PC-9 (cell line): ENCODE measurements at regions of chr18 and their contacts with region 1.

Region 1: DNA sequence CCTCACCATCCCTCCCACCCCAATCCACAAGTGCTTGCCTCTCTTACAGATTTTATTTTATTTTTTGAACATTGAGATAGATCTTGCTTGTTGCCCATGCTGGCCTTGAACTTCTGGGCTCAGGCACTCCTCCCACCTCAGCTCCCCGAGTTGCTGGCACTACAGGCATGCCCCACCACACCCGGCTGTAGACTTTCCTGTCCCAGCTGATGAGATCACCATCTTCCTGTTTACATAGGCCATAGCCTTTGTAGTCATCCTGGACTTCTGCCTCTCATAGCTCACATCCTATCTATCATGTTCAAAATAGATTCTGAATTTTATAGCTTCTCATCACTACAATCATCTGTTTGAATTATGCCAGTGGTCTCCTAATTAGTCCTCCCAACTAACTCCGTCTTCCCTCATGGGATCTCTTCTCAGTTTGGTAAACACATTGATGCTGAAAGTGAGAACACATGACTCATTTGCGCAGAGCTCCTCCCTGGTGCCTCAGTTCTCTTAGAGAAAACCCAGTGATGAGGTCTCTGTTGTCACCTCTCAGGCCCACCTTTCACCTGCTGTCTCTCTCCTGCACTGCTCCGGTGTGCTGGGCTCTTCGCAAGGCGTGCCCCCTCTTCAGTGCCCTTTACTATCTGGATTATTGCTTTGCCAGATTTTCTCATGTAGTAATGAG is 243.0 kb downstream of the ZNF407 start:
- DNase-seq: peak in 1 of 2 experiments; percentile 52
- H3K4me3 ChIP-seq: no peak overlapping the region
- H3K27ac ChIP-seq: no peak overlapping the region
- H3K4me1 ChIP-seq: peaks cover 18% of the 10 kb centered on the region
- H3K27me3 ChIP-seq: no peaks in the 10 kb centered on the region
- CTCF ChIP-seq: no peak

Region 2: GRCh38 chr18:74567822-74568221 is 272.8 kb before region 1 on chr18:
- CTCF ChIA-PET with region 1: no interaction called
- POLR2A ChIA-PET with region 1: no interaction called
- intact Hi-C with region 1: no loop called
- DNase-seq: no peak
- H3K4me3 ChIP-seq: no peak overlapping the region
- H3K27ac ChIP-seq: no peak overlapping the region
- H3K4me1 ChIP-seq: no peaks in the 10 kb centered on the region
- H3K27me3 ChIP-seq: peaks cover 91% of the 10 kb centered on the region
- CTCF ChIP-seq: no peak

Region 3: DNA sequence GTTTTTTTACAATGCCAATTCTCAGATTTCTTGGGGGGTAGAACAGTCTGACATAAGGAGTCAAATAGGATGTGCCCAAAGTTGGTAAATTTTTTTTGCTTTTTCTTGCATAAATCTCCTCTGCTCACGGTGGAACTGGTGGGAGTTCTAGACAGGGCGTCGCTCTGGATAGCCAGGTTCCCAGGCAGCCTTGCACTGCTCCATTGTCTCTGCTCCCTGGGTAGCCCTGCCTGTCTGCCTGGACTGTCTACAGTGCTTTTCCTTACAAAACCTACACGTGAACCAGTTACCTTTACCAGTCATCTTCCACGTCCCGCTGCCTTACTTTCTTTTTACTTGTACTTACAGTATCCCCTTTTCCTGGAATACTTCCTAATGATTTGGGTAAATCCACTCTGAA is 125.8 kb before region 1 on chr18:
- CTCF ChIA-PET with region 1: no interaction called
- POLR2A ChIA-PET with region 1: no interaction called
- intact Hi-C with region 1: no loop called
- DNase-seq: no peak
- H3K4me3 ChIP-seq: no peak overlapping the region
- H3K27ac ChIP-seq: no peak overlapping the region
- H3K4me1 ChIP-seq: no peaks in the 10 kb centered on the region
- H3K27me3 ChIP-seq: no peaks in the 10 kb centered on the region
- CTCF ChIP-seq: no peak

Region 4: DNA sequence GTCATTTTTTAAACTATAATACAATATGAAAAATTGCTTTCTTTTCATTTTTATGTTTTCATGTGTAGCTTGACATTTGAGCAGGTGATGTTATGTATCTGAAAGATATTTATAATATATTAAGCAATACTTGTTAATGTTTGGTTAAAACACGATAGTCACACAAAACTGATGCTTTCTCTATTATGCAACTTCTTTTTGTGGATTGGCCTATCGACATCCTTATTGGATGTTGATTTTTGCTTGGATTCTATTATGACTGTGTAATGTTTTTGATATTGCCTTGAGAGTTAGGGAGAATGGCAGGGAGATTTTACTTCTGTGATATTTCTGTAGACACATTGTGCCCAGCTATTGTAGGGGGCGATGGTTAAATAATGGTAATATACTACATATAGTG is 114.9 kb before region 1 on chr18:
- CTCF ChIA-PET with region 1: no interaction called
- POLR2A ChIA-PET with region 1: interaction called, 10 read pairs
- intact Hi-C with region 1: no loop called
- DNase-seq: no peak
- H3K4me3 ChIP-seq: no peak overlapping the region
- H3K27ac ChIP-seq: no peak overlapping the region
- H3K4me1 ChIP-seq: no peaks in the 10 kb centered on the region
- H3K27me3 ChIP-seq: no peaks in the 10 kb centered on the region
- CTCF ChIP-seq: no peak

Region 5: GRCh38 chr18:74896390-74896991 is 55.9 kb after region 1 on chr18:
- CTCF ChIA-PET with region 1: no interaction called
- POLR2A ChIA-PET with region 1: no interaction called
- intact Hi-C with region 1: no loop called
- DNase-seq: peak; percentile 52 to 54
- H3K4me3 ChIP-seq: no peak overlapping the region
- H3K27ac ChIP-seq: no peak overlapping the region
- H3K4me1 ChIP-seq: no peaks in the 10 kb centered on the region
- H3K27me3 ChIP-seq: no peaks in the 10 kb centered on the region
- CTCF ChIP-seq: peak; percentile 76